OCI-LY7 (cell line): ENCODE measurements at regions of chr4 and their contacts with region 1.

Region 1: DNA sequence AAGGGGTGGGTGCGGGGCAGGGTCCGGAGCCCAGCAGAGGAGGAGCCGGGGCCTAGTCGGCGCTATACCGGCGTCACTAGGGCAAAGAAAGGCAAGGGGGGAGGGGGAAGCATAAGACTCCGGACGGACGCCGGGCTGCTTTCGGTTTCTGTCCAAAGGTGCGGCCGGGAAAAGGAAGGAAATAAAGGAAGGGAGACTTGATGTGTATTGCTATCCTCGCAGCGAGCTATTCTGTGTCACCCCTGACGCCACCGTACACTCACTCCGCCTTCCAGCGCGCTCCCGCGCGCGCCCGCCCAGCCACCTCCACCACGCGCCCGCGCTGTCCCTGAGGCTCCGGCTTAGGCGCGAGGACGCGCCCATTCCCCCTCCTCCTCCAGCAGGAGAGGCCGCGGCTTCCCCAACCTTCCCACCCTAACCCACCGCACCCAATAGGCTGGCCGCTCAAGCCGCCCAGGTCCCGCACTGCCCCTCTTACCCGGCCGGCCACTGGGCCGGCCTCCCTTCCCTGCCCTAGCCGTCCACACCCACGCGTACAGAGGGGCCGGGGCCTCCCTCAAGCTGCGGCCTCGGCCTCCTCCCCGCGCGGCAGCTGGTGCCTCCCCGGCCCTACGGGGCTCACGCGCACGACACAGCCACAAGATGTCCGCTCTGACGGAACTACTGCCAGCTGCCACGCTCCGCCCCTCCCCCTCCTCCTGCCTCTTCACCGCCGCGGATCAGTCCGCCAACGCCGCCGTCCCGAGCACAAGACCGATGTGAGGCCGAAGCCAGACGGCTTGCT is at the start of gene UBE2D3:
- DNase-seq: peak; percentile 93
- H3K4me3 ChIP-seq: peak within 1 kb of the TSS; percentile 89
- H3K27ac ChIP-seq: peak within 1 kb of the TSS; percentile 94
- H3K4me1 ChIP-seq: peaks cover 41% of the 10 kb centered on the region
- CTCF ChIP-seq: peak; percentile 32; the same call in 1 of the 2 replicates
- total RNA-seq, gene UBE2D3: 363 and 374 TPM in 2 replicates

Region 2: GRCh38 chr4:101347557-101348366 is 1479.3 kb before region 1 on chr4:
- CTCF ChIA-PET with region 1: no interaction called
- POLR2A ChIA-PET with region 1: no interaction called
- intact Hi-C with region 1: loop called (anchors 5 kb)
- DNase-seq: peak; percentile 95
- H3K4me3 ChIP-seq: peak overlapping the region; percentile 75
- H3K27ac ChIP-seq: peak overlapping the region; percentile 73
- H3K4me1 ChIP-seq: peaks cover 20% of the 10 kb centered on the region
- CTCF ChIP-seq: peak; percentile 40

Region 3: DNA sequence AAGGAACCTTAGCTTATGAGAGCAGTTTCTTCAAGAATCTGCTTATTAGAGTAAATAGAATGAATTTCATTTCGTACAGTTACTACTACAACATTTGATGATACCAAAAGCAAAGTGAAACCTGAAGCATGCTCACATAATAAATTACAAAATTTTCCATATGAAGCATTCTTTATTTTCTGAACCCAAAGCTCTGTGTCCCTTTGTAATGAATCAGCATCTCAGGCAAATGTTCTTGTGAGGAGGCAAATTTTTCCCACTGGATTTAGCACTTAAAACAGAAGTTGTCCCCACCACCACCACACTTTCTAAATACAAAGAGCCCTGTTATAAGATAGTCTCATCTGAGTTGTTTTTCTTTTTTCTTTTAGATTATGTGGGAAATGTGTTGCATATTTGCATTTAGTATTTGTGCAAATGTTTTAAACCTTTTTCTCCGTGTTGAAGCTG is 396.6 kb before region 1 on chr4:
- CTCF ChIA-PET with region 1: no interaction called
- POLR2A ChIA-PET with region 1: interaction called, 3 read pairs
- intact Hi-C with region 1: loop called (anchors 2 kb)
- DNase-seq: no peak
- H3K4me3 ChIP-seq: peak overlapping the region; percentile 69
- H3K27ac ChIP-seq: peak overlapping the region; percentile 48
- H3K4me1 ChIP-seq: peaks cover 6% of the 10 kb centered on the region
- CTCF ChIP-seq: no peak

Region 4: DNA sequence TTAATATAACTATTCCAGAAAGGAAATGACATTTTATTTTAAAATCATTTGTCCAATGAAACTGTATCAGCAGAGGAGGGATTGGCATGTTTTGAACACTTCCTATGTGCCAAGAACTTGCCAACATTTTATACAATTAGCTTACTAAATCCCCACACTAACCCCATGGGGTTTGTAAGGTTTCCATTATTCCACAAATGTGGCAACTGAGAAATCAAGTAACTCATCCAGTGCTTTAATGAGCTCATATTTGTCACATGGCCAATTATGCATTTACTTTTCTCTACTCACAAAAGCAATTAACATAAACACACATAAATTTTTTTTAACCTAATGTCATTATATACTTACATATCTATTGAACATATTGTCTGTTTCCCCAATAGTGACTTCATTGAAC is 103.6 kb before region 1 on chr4:
- CTCF ChIA-PET with region 1: no interaction called
- POLR2A ChIA-PET with region 1: no interaction called
- intact Hi-C with region 1: no loop called
- DNase-seq: no peak
- H3K4me3 ChIP-seq: no peak overlapping the region
- H3K27ac ChIP-seq: no peak overlapping the region
- H3K4me1 ChIP-seq: no peaks in the 10 kb centered on the region
- CTCF ChIP-seq: no peak

Region 5: DNA sequence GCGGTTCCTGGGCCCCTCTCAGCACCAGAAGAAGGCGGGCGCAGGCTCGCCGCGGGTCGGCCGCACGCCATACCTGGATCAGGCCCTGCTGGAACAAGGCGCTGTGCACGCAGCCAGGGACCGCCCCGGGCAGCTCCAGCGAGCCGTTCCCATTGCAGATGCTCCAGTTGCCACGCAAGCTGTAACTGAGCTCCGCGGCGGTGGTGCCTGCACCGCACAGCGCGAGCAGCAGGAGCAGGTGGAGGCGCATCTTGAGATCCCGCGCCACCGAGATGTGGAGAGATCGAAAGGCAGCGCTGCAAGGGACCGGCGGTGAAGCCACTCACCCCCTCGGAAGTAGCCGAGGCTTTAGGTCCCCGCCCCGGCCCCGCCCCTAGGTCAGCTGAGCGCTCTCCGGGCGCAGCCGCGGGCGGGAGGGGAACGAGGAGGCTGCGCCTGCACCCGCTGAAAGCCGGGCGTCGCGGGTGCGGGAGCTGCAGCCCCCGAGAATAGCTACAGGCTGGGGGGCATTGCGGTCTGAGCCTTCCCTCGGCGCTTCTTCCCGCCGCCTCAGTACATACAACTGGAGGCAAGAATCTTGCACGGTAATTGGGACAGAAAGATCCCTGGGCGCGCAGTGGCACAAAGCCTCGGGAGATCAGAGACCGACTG is 66.3 kb before region 1 on chr4 and contains the start of gene MANBA:
- CTCF ChIA-PET with region 1: no interaction called
- POLR2A ChIA-PET with region 1: interaction called, 9 read pairs
- intact Hi-C with region 1: loop called (anchors 1 kb)
- DNase-seq: peak; percentile 91
- H3K4me3 ChIP-seq: peak within 1 kb of the TSS; percentile 74
- H3K27ac ChIP-seq: peak within 1 kb of the TSS; percentile 40
- H3K4me1 ChIP-seq: peaks cover 17% of the 10 kb centered on the region
- CTCF ChIP-seq: no peak
- total RNA-seq, gene MANBA: 15.8 and 30.0 TPM in 2 replicates

Region 6: DNA sequence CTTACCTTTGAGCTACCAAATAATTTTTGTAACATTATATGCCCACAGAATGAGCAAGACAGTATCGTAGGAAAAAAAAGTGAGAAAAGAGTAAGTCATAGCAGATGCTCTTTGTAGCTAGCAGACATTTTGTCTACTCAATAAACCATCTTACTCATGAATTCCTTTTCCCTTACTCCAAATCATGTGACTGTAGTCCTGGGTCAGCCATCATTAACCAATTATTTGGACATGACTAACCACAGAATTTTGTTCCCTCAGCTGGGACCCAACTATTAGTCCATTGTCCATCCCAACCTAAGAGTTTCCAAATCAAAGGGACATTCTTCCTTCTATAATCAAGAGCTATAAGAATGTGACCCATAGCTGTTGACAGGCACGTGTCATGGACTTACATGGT is 11.1 kb before region 1 on chr4:
- CTCF ChIA-PET with region 1: interaction called, 4 read pairs
- POLR2A ChIA-PET with region 1: interaction called, 63 read pairs
- intact Hi-C with region 1: no loop called
- DNase-seq: no peak
- H3K4me3 ChIP-seq: no peak overlapping the region
- H3K27ac ChIP-seq: no peak overlapping the region
- H3K4me1 ChIP-seq: peaks cover 33% of the 10 kb centered on the region
- CTCF ChIP-seq: no peak

Region 7: DNA sequence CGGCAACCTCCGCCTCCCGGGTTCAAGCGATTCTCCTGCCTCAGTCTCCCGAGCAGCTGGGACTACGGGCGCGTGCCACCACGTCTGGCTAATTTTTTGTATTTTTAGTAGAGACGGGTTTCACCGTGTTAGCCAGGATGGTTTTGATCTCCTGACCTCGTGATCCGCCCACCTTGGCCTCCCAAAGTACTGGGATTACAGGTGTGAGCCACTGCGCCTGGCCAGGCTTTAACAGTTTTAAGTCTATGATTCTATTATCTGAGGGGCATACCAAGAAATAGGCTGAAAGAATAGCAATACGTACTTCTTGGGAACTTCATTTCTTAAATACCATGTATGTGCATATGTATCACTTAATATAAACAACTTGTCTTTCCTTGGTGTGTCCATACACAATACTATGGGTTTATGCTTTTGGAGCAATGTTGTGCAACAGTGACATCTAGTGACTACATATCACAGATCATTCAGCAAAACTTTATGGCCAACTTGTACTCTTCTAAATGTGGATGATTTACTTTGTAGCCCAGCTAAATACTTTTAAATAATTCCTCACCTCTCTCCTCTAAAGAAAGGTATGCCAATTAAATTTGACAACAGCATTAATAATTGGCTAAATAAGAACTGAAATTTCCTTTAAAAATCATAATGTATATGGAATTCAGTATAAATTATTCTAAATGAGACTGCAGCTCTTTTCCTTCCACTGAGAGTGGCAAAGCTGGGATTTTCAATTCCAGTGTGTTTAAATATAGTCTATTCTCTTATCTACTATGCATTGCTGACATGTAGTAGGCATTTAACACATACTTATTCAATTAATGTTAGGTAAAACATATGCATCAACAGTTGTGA is 182.0 kb after region 1 on chr4:
- CTCF ChIA-PET with region 1: no interaction called
- POLR2A ChIA-PET with region 1: no interaction called
- intact Hi-C with region 1: loop called (anchors 5 kb)
- DNase-seq: peak; percentile 75
- H3K4me3 ChIP-seq: no peak overlapping the region
- H3K27ac ChIP-seq: no peak overlapping the region
- H3K4me1 ChIP-seq: no peaks in the 10 kb centered on the region
- CTCF ChIP-seq: peak; percentile 91

Region 8: GRCh38 chr4:103099691-103100392 is 272.8 kb after region 1 on chr4 and contains the start of gene BDH2:
- CTCF ChIA-PET with region 1: interaction called, 3 read pairs
- POLR2A ChIA-PET with region 1: no interaction called
- intact Hi-C with region 1: loop called (anchors 5 kb)
- DNase-seq: peak; percentile 94
- H3K4me3 ChIP-seq: peak within 1 kb of the TSS; percentile 69
- H3K27ac ChIP-seq: no peak within 1 kb of the TSS
- H3K4me1 ChIP-seq: peaks cover 8% of the 10 kb centered on the region
- CTCF ChIP-seq: peak; percentile 90
- total RNA-seq, gene BDH2: 28.2 and 35.2 TPM in 2 replicates

Region 9: GRCh38 chr4:103193457-103193856 is 366.4 kb after region 1 on chr4:
- CTCF ChIA-PET with region 1: no interaction called
- POLR2A ChIA-PET with region 1: no interaction called
- intact Hi-C with region 1: no loop called
- DNase-seq: no peak
- H3K4me3 ChIP-seq: no peak overlapping the region
- H3K27ac ChIP-seq: no peak overlapping the region
- H3K4me1 ChIP-seq: peaks cover 14% of the 10 kb centered on the region
- CTCF ChIP-seq: no peak